GM12878 (cell line): ENCODE measurements at regions of chr10 and their contacts with region 1.

Region 1: GRCh38 chr10:110368002-110368401 is 63.3 kb upstream of the SMNDC1 start:
- DNase-seq: no peak
- ATAC-seq: peak; percentile 86
- H3K4me3 ChIP-seq: no peak overlapping the region
- H3K27ac ChIP-seq: no peak overlapping the region; the same call in 1 of the 2 replicates
- H3K4me1 ChIP-seq: peaks cover 29% of the 10 kb centered on the region
- H3K27me3 ChIP-seq: no peaks in the 10 kb centered on the region
- CTCF ChIP-seq: no peak
- EP300 ChIP-seq: peak in 1 of 2 experiments; percentile 43; a peak in 1 of 4 replicates
- POLR2A ChIP-seq: no peak
- RAD21 ChIP-seq: no peak

Region 2: DNA sequence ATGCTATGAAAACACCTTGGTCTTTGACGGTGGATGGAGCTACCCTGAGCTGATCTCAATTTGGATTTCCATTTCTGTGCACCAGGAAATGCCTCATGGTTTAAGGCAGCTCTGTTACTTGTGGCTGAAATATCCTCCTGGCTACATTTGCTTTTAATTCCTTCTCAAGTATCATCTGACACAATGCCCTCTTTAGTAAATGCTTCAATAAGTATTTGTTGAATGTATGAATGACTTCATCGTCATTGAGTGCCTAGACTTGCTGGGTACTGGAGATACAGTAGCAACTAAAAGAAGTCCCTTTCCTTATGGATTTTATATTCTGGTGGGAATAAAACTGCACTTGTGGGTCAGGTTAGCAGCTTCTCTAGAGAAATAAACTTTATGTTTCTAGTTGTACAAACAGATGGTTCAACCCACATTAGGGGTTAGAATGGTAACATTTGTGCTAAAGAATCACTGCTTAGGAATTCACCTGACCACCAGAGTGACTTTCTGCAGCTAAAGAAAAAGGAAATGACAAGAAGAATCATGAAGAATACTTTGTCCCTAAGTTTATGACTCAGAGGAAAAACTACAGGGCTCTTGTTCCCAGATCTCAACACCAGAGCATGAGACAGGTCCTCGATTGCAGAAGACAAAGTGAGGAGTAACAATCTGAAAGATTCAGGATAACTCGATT is 41.5 kb before region 1 on chr10:
- CTCF ChIA-PET with region 1: no interaction called
- POLR2A ChIA-PET with region 1: interaction called, 6 read pairs
- RAD21 ChIA-PET with region 1: interaction called, 5 read pairs
- SMC1A ChIA-PET with region 1: interaction called, 14 read pairs
- in situ Hi-C with region 1: no loop called
- intact Hi-C with region 1: no loop called
- DNase-seq: peak; percentile 51
- ATAC-seq: peak; percentile 49
- H3K4me3 ChIP-seq: no peak overlapping the region
- H3K27ac ChIP-seq: peak overlapping the region; percentile 79
- H3K4me1 ChIP-seq: peaks cover 39% of the 10 kb centered on the region
- H3K27me3 ChIP-seq: no peaks in the 10 kb centered on the region
- CTCF ChIP-seq: no peak
- EP300 ChIP-seq: peak in 1 of 2 experiments; percentile 60; a peak in 1 of 4 replicates
- POLR2A ChIP-seq: no peak
- RAD21 ChIP-seq: no peak

Region 3: DNA sequence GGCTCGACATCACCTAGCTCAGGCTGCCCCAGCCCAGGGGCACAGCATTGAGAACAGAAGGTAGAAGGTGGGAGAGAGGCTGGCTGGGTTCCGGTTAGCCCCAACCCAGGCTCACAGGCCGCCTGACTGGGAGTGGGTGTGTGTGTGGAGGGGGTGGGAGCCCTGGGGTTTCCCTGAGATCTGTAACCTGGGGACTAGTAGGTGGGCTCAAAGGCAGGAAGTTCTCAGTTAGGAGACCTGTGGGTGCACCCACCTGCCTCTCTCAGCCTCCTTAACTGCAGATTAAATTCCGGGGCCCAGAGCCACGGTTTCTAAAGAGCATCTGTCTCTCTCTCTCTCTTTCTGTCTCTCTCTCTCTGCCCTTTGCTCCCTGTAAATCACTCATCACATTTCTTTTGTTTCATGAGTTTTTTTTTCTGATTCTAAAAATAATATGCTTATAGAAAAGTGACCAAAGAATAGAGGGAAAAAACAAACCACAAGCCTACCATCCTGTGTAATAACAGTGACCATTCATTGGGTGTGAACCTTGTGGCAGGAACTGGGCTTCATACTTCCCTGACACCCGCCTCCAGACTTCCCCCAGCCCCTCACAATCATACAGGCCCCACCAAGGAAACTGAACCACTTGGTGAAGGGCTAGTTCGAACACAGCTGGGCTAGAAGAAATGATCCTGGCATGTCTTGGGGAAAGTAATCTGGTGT is 20.1 kb after region 1 on chr10:
- CTCF ChIA-PET with region 1: interaction called, 3 read pairs
- POLR2A ChIA-PET with region 1: interaction called, 6 read pairs
- RAD21 ChIA-PET with region 1: interaction called, 6 read pairs
- SMC1A ChIA-PET with region 1: interaction called, 19 read pairs
- in situ Hi-C with region 1: no loop called
- intact Hi-C with region 1: no loop called
- DNase-seq: peak; percentile 83
- ATAC-seq: peak; percentile 87
- H3K4me3 ChIP-seq: no peak overlapping the region
- H3K27ac ChIP-seq: peak overlapping the region; percentile 75
- H3K4me1 ChIP-seq: peaks cover 26% of the 10 kb centered on the region
- H3K27me3 ChIP-seq: no peaks in the 10 kb centered on the region
- CTCF ChIP-seq: no peak
- EP300 ChIP-seq: peak in 1 of 2 experiments; percentile 96; a peak in 3 of 4 replicates
- POLR2A ChIP-seq: no peak
- RAD21 ChIP-seq: peak; percentile 22; the same call in 1 of the 2 replicates

Region 4: GRCh38 chr10:110395725-110396651 is 28.0 kb after region 1 on chr10:
- CTCF ChIA-PET with region 1: no interaction called
- POLR2A ChIA-PET with region 1: interaction called, 5 read pairs
- RAD21 ChIA-PET with region 1: interaction called, 5 read pairs
- SMC1A ChIA-PET with region 1: interaction called, 14 read pairs
- in situ Hi-C with region 1: no loop called
- intact Hi-C with region 1: no loop called
- DNase-seq: peak; percentile 91
- ATAC-seq: peak; percentile 92
- H3K4me3 ChIP-seq: no peak overlapping the region
- H3K27ac ChIP-seq: peak overlapping the region; percentile 69
- H3K4me1 ChIP-seq: peaks cover 16% of the 10 kb centered on the region
- H3K27me3 ChIP-seq: no peaks in the 10 kb centered on the region
- CTCF ChIP-seq: no peak
- EP300 ChIP-seq: peak; percentile 99 to 100
- POLR2A ChIP-seq: no peak
- RAD21 ChIP-seq: peak; percentile 24; the same call in 1 of the 2 replicates

Region 5: DNA sequence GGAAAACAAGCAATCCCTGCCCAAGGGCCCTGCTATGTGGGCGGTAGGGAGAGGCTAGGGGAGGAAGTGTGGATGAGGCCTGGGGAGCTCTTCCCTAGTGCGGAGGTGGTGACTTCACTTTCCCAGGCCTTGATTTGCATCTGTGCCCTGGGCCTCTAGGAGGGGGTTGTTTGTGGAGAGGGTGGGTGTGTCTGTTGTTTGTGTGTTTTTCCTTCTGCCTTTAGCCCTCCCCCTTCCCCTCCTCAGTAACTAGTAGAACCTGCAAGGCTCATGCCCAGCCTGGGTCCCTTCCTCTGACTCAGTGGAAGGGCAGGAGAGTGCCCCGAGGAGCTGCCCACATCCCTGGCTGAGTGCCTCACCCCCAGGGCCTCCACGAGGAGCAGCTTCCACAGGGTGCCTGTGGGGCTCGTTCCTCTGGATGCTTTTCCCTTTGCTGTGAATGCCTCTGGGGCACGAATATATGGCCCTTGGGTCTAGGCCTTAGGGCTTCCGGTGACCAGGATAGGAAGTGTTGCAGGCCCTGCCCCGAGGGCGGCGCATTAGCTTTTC is 40.3 kb after region 1 on chr10:
- CTCF ChIA-PET with region 1: interaction called, 3 read pairs
- POLR2A ChIA-PET with region 1: interaction called, 25 read pairs
- RAD21 ChIA-PET with region 1: interaction called, 32 read pairs
- SMC1A ChIA-PET with region 1: interaction called, 39 read pairs
- in situ Hi-C with region 1: no loop called
- intact Hi-C with region 1: no loop called
- DNase-seq: no peak
- ATAC-seq: no peak
- H3K4me3 ChIP-seq: no peak overlapping the region
- H3K27ac ChIP-seq: no peak overlapping the region
- H3K4me1 ChIP-seq: peaks cover 48% of the 10 kb centered on the region
- H3K27me3 ChIP-seq: no peaks in the 10 kb centered on the region
- CTCF ChIP-seq: no peak
- EP300 ChIP-seq: no peak
- POLR2A ChIP-seq: no peak
- RAD21 ChIP-seq: no peak

Region 6: GRCh38 chr10:110918643-110919363 is 550.8 kb after region 1 on chr10 and contains the start of gene BBIP1:
- CTCF ChIA-PET with region 1: no interaction called
- POLR2A ChIA-PET with region 1: no interaction called
- RAD21 ChIA-PET with region 1: no interaction called
- SMC1A ChIA-PET with region 1: no interaction called
- in situ Hi-C with region 1: no loop called
- intact Hi-C with region 1: no loop called
- DNase-seq: peak; percentile 99
- ATAC-seq: peak; percentile 86
- H3K4me3 ChIP-seq: peak within 1 kb of the TSS; percentile 71
- H3K27ac ChIP-seq: peak within 1 kb of the TSS; percentile 96
- H3K4me1 ChIP-seq: peaks cover 7% of the 10 kb centered on the region; the same call in 1 of the 2 replicates
- H3K27me3 ChIP-seq: no peaks in the 10 kb centered on the region
- CTCF ChIP-seq: no peak
- EP300 ChIP-seq: no peak; a peak in 1 of 4 replicates
- POLR2A ChIP-seq: peak; percentile 92
- RAD21 ChIP-seq: no peak
- polyA plus RNA-seq, gene BBIP1: 34.7 to 40.8 TPM